CD4-positive, alpha-beta memory T cell (primary cell): ENCODE measurements at regions of chr14 and their contacts with region 1.

Region 1: GRCh38 chr14:91866061-91866460 is 1.3 kb downstream of the TC2N start:
- DNase-seq: peak in 3 of 5 donors; percentile 33 to 46 (median 38)
- H3K4me3 ChIP-seq: peak overlapping the region; percentile 76 to 93
- H3K4me3 Mint-ChIP-seq: peak overlapping the region; percentile 97 to 100 (median 99)
- H3K27ac ChIP-seq: peak overlapping the region; percentile 79
- H3K27ac Mint-ChIP-seq: peak overlapping the region; percentile 94 to 100 (median 97)
- H3K4me1 ChIP-seq: peaks cover 79% of the 10 kb centered on the region
- H3K4me1 Mint-ChIP-seq: peaks cover 50 to 96% (median 68%) of the 10 kb centered on the region in 4 donors
- H3K27me3 ChIP-seq: no peaks in the 10 kb centered on the region
- H3K27me3 Mint-ChIP-seq: no peaks in the 10 kb centered on the region

Region 2: GRCh38 chr14:91510174-91511042 is 355.7 kb before region 1 on chr14 and contains the start of gene PPP4R3A:
- CTCF ChIA-PET with region 1: no interaction called
- POLR2A ChIA-PET with region 1: interaction called, 5 read pairs
- intact Hi-C with region 1: loop called (anchors 2 kb)
- DNase-seq: peak; percentile 93 to 95 (median 95)
- H3K4me3 ChIP-seq: peak within 1 kb of the TSS; percentile 59 to 88
- H3K4me3 Mint-ChIP-seq: peak within 1 kb of the TSS; percentile 97 to 100 (median 100)
- H3K27ac ChIP-seq: peak within 1 kb of the TSS; percentile 99
- H3K27ac Mint-ChIP-seq: peak within 1 kb of the TSS; percentile 99 to 100 (median 100)
- H3K4me1 ChIP-seq: peaks cover 37% of the 10 kb centered on the region
- H3K4me1 Mint-ChIP-seq: peaks cover 21 to 44% (median 29%) of the 10 kb centered on the region in 4 donors
- H3K27me3 ChIP-seq: no peaks in the 10 kb centered on the region
- H3K27me3 Mint-ChIP-seq: no peaks in the 10 kb centered on the region
- total RNA-seq, gene PPP4R3A: 162 to 169 TPM

Region 3: DNA sequence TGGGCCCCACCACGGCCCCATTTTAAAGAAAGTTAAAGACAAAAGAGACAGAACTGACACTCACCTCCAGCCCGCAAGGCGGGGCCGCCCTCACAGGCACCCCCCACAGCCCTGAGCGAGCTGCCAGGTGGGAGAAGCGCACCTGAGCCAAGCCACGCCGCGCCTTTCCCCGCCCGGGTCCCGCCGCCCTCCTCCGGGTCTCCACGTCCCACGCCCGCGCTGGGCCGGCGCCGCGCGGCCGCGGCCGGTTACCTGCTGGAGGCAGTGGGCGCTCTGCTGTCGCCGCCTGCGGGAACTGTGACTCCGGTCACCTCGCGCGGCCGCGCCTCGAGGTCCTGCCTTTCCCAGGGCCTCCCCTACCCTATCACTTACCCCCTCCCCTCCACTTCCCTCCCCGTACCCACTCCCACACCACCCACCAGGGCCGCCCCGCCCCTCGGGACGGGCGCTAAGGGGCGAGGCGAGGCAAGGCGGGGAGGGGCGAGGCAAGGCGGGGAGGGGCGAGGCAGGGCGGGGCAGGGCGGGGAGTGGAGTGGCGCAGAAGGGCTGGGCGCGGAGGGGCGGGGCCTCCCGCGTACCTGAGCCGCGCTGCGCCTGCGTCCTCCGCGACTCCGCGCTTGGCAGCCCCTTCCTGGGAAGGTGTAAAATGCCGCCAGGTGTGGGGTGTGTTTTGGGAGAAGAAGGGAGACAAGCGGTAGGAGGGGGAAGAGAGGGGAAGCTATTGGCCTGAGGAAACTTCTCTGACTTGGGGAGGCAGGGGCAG is 29.8 kb before region 1 on chr14:
- CTCF ChIA-PET with region 1: interaction called, 5 read pairs
- POLR2A ChIA-PET with region 1: interaction called, 93 read pairs
- intact Hi-C with region 1: loop called (anchors 1 kb)
- DNase-seq: peak; percentile 80 to 90 (median 83)
- H3K4me3 ChIP-seq: peak overlapping the region; percentile 34 to 63
- H3K4me3 Mint-ChIP-seq: peak overlapping the region; percentile 84 to 92 (median 88)
- H3K27ac ChIP-seq: peak overlapping the region; percentile 68
- H3K27ac Mint-ChIP-seq: peak overlapping the region; percentile 81 to 95 (median 91)
- H3K4me1 ChIP-seq: peaks cover 72% of the 10 kb centered on the region
- H3K4me1 Mint-ChIP-seq: peaks cover 64 to 94% (median 77%) of the 10 kb centered on the region in 4 donors
- H3K27me3 ChIP-seq: no peaks in the 10 kb centered on the region
- H3K27me3 Mint-ChIP-seq: no peaks in the 10 kb centered on the region

Region 4: GRCh38 chr14:91843437-91843836 is 22.6 kb before region 1 on chr14:
- CTCF ChIA-PET with region 1: interaction called, 5 read pairs
- POLR2A ChIA-PET with region 1: interaction called, 93 read pairs
- intact Hi-C with region 1: no loop called
- DNase-seq: no peak
- H3K4me3 ChIP-seq: no peak overlapping the region
- H3K4me3 Mint-ChIP-seq: no peak overlapping the region
- H3K27ac ChIP-seq: no peak overlapping the region
- H3K27ac Mint-ChIP-seq: peak overlapping the region in 3 of 7 donors; percentile 29 to 40 (median 32)
- H3K4me1 ChIP-seq: peaks cover 57% of the 10 kb centered on the region
- H3K4me1 Mint-ChIP-seq: peaks cover 53 to 87% (median 75%) of the 10 kb centered on the region in 4 donors
- H3K27me3 ChIP-seq: no peaks in the 10 kb centered on the region
- H3K27me3 Mint-ChIP-seq: no peaks in the 10 kb centered on the region

Region 5: DNA sequence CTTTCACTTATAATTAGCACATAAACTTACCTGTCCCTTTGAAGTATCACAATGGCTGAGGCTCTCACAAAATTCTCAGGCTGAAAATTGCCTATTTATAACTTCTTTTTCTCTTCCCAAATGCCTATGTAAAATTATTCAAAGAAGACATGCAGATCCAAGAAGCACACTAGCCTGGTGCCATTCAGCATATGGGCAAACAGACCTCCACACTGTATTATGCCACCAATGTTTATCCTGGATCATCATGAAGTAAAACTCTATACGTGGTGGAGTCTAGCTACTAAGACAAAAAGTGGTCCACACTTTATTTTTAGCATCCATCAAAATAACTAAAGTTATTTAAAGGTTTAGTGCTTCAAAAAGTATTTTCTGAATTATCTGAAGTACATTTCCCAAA is 14.5 kb before region 1 on chr14:
- CTCF ChIA-PET with region 1: interaction called, 9 read pairs
- POLR2A ChIA-PET with region 1: interaction called, 99 read pairs
- intact Hi-C with region 1: loop called (anchors 2 kb)
- DNase-seq: no peak
- H3K4me3 ChIP-seq: no peak overlapping the region
- H3K4me3 Mint-ChIP-seq: no peak overlapping the region
- H3K27ac ChIP-seq: no peak overlapping the region
- H3K27ac Mint-ChIP-seq: peak overlapping the region in 4 of 7 donors; percentile 11 to 84 (median 64)
- H3K4me1 ChIP-seq: peaks cover 49% of the 10 kb centered on the region
- H3K4me1 Mint-ChIP-seq: peaks cover 54 to 87% (median 76%) of the 10 kb centered on the region in 4 donors
- H3K27me3 ChIP-seq: no peaks in the 10 kb centered on the region
- H3K27me3 Mint-ChIP-seq: no peaks in the 10 kb centered on the region

Region 6: GRCh38 chr14:91883753-91884152 is 17.7 kb after region 1 on chr14:
- CTCF ChIA-PET with region 1: no interaction called
- POLR2A ChIA-PET with region 1: interaction called, 86 read pairs
- intact Hi-C with region 1: no loop called
- DNase-seq: no peak
- H3K4me3 ChIP-seq: no peak overlapping the region
- H3K4me3 Mint-ChIP-seq: no peak overlapping the region
- H3K27ac ChIP-seq: no peak overlapping the region
- H3K27ac Mint-ChIP-seq: peak overlapping the region in 2 of 7 donors; percentile 5 to 35
- H3K4me1 ChIP-seq: peaks cover 18% of the 10 kb centered on the region
- H3K4me1 Mint-ChIP-seq: peaks cover 19 to 36% (median 25%) of the 10 kb centered on the region in 4 donors
- H3K27me3 ChIP-seq: no peaks in the 10 kb centered on the region
- H3K27me3 Mint-ChIP-seq: peaks cover 0 to 2% of the 10 kb centered on the region in 2 donors

Region 7: GRCh38 chr14:91893007-91893406 is 26.9 kb after region 1 on chr14:
- CTCF ChIA-PET with region 1: interaction called, 16 read pairs
- POLR2A ChIA-PET with region 1: interaction called, 86 read pairs
- intact Hi-C with region 1: loop called (anchors 2 kb)
- DNase-seq: peak in 4 of 5 donors; percentile 30 to 48 (median 41)
- H3K4me3 ChIP-seq: no peak overlapping the region
- H3K4me3 Mint-ChIP-seq: peak overlapping the region in 2 of 8 donors; percentile 43 to 53
- H3K27ac ChIP-seq: no peak overlapping the region
- H3K27ac Mint-ChIP-seq: peak overlapping the region in 3 of 7 donors; percentile 9 to 38 (median 36)
- H3K4me1 ChIP-seq: peaks cover 54% of the 10 kb centered on the region
- H3K4me1 Mint-ChIP-seq: peaks cover 29 to 71% (median 48%) of the 10 kb centered on the region in 4 donors
- H3K27me3 ChIP-seq: no peaks in the 10 kb centered on the region
- H3K27me3 Mint-ChIP-seq: no peaks in the 10 kb centered on the region

Region 8: GRCh38 chr14:91980127-91980741 is 114.2 kb after region 1 on chr14:
- CTCF ChIA-PET with region 1: no interaction called
- POLR2A ChIA-PET with region 1: no interaction called
- intact Hi-C with region 1: no loop called
- DNase-seq: no peak
- H3K4me3 ChIP-seq: no peak overlapping the region
- H3K4me3 Mint-ChIP-seq: no peak overlapping the region
- H3K27ac ChIP-seq: no peak overlapping the region
- H3K27ac Mint-ChIP-seq: peak overlapping the region in 2 of 7 donors; percentile 2 to 10
- H3K4me1 ChIP-seq: no peaks in the 10 kb centered on the region
- H3K4me1 Mint-ChIP-seq: peaks cover 6 to 9% (median 8%) of the 10 kb centered on the region in 4 donors
- H3K27me3 ChIP-seq: no peaks in the 10 kb centered on the region
- H3K27me3 Mint-ChIP-seq: no peaks in the 10 kb centered on the region